ENCODE measurements at regions of chr1 and their contacts with region 1.

Region 1: GRCh38 chr1:67685067-67685557 is at the start of gene GADD45A:
- DNase-seq: peak; percentile 100
- H3K4me3 ChIP-seq: peak within 1 kb of the TSS; percentile 73 to 84
- H3K27ac ChIP-seq: peak within 1 kb of the TSS; percentile 96
- H3K4me1 ChIP-seq: peaks cover 32% of the 10 kb centered on the region
- H3K27me3 ChIP-seq: no peaks in the 10 kb centered on the region
- CTCF ChIP-seq: no peak
- POLR2A ChIP-seq: peak; percentile 95 to 99
- total RNA-seq, gene GADD45A: 44.4 TPM

Region 2: GRCh38 chr1:67618285-67619018 is 66.7 kb before region 1 on chr1:
- intact Hi-C with region 1: loop called (anchors 10 kb)
- DNase-seq: no peak
- H3K4me3 ChIP-seq: peak overlapping the region in 1 of 2 donors; percentile 31
- H3K27ac ChIP-seq: peak overlapping the region; percentile 66
- H3K4me1 ChIP-seq: peaks cover 57% of the 10 kb centered on the region
- H3K27me3 ChIP-seq: no peaks in the 10 kb centered on the region
- CTCF ChIP-seq: no peak
- POLR2A ChIP-seq: no peak